ENCODE measurements at regions of chr12 and their contacts with region 1.

Region 1: DNA sequence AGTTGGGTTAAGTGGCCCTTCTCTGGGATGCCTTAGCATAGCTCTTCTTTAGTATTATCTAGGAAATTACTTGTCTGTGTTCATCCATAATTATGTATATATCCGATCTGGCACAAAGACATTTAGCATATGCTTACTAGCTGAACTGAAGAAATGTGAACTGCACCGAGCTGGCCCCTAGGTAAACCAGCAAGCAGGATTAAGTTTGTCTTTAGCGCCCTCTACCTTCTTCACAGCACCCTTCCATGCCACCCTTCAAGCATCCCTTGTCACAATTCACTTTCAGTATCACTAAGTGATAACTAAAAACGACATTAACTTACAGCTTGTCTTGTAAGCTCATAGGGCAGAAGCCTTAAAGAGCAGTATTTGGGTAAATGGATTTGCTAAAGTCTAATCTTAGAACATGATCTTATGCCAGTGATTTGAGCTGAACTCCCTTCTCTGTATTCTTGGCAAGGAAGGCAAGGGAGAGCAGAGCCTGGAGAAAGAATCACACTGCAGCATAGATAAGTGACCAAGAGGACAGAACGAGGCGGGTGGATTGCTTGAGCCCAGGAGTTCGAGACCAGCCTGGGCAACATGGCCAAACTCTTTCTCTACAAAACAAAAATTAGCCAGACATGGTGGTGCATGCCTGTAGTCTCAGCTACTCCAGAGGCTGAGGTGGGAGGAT is 2.6 kb upstream of the HAL start:
- DNase-seq: no peak
- ATAC-seq: peak; percentile 96
- H3K4me3 Mint-ChIP-seq: no peak overlapping the region
- H3K27ac Mint-ChIP-seq: peak overlapping the region; percentile 25
- H3K4me1 Mint-ChIP-seq: peaks cover 7% of the 10 kb centered on the region
- H3K27me3 Mint-ChIP-seq: no peaks in the 10 kb centered on the region
- CTCF ChIP-seq: peak; percentile 32

Region 2: GRCh38 chr12:95117178-95117599 is 881.6 kb before region 1 on chr12:
- CTCF ChIA-PET with region 1: interaction called, 3 read pairs
- POLR2A ChIA-PET with region 1: no interaction called
- intact Hi-C with region 1: loop called (anchors 1 kb)
- DNase-seq: no peak
- ATAC-seq: peak; percentile 84
- H3K4me3 Mint-ChIP-seq: no peak overlapping the region
- H3K27ac Mint-ChIP-seq: no peak overlapping the region
- H3K4me1 Mint-ChIP-seq: peaks cover 3% of the 10 kb centered on the region
- H3K27me3 Mint-ChIP-seq: no peaks in the 10 kb centered on the region
- CTCF ChIP-seq: no peak

Region 3: DNA sequence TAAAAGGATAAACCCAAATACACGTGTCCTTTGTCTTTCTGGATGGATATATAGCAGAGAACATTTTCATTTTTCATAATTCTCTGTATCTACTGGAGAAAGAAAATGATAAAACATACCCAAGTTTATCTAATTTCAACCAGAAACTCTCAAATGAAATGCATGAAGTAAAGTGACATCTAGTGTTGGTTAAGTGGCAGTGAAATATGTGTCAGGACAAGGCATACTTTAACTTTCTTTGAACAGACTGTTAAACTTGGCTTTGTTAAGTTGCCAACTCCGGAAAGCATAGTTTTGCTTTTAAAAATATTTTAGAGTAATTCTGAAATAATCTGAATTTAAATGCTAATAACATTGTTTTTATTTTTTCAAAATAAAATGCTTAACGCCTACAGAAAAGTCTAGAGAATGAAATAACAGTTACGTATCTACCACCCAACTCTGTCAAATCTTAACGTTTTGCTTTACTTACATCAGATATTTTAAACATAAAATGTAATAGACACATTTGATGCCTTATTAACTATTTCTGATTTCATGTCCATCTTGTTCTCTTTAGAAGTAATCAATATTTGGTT is 183.0 kb before region 1 on chr12:
- CTCF ChIA-PET with region 1: interaction called, 3 read pairs
- POLR2A ChIA-PET with region 1: no interaction called
- intact Hi-C with region 1: loop called (anchors 5 kb)
- DNase-seq: no peak
- ATAC-seq: no peak
- H3K4me3 Mint-ChIP-seq: no peak overlapping the region
- H3K27ac Mint-ChIP-seq: no peak overlapping the region
- H3K4me1 Mint-ChIP-seq: no peaks in the 10 kb centered on the region
- H3K27me3 Mint-ChIP-seq: peaks cover 12% of the 10 kb centered on the region
- CTCF ChIP-seq: no peak

Region 4: GRCh38 chr12:95918194-95918993 is 80.4 kb before region 1 on chr12:
- CTCF ChIA-PET with region 1: interaction called, 67 read pairs
- POLR2A ChIA-PET with region 1: no interaction called
- intact Hi-C with region 1: loop called (anchors 1 kb)
- DNase-seq: no peak
- ATAC-seq: peak; percentile 82
- H3K4me3 Mint-ChIP-seq: no peak overlapping the region
- H3K27ac Mint-ChIP-seq: no peak overlapping the region
- H3K4me1 Mint-ChIP-seq: no peaks in the 10 kb centered on the region
- H3K27me3 Mint-ChIP-seq: peaks cover 6% of the 10 kb centered on the region
- CTCF ChIP-seq: peak; percentile 43